ENCODE measurements at regions of chr2 and their contacts with region 1.

Region 1: DNA sequence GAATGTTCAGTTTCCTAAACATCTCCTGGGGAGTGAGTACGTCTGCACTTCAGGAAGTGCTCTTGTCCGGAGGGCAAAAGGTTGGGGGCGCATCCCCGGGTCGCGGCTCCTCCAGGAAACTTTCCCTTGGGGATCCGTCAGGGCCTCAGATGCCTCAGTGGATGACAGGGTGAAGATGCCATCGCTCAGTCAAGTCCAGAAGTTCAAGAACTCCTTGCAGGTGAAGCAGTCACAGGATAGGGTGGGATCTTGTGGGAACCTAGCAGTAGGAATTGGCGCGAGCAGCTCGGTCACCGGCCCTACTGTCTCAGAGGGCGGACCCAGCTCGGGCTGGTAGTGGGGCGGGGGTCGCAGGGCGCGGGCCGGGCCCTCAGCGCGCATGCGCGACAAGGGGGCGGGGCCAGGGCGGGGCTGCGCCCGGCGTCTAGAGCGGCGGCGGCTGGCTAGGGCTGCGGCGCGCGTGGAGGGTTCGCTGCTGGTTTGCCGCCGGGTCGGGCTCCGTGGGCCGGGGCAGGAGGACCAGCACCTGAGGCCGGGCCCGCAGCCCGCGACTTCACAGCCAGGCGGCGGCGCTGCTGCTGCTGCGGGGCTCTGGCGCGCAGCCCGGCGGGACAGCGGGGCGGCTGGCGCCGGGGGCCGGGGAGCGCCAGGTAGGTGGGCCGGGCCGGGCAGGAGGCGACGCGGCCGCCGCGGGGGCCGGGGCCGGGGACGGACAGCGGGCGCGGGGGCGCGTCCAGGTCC is at the start of gene INPP4A:
- DNase-seq: peak in 9 of 10 donors; percentile 46 to 81 (median 65)
- H3K4me3 ChIP-seq: peak within 1 kb of the TSS; percentile 52 to 86 (median 74)
- H3K27ac ChIP-seq: peak within 1 kb of the TSS in 57 of 59 donors; percentile 9 to 91 (median 72)
- H3K27me3 ChIP-seq: no peaks in the 10 kb centered on the region
- CTCF ChIP-seq: peak in 15 of 56 donors; percentile 7 to 48 (median 19)
- total RNA-seq, gene INPP4A: 54.2 to 160 (median 122) TPM

Region 2: DNA sequence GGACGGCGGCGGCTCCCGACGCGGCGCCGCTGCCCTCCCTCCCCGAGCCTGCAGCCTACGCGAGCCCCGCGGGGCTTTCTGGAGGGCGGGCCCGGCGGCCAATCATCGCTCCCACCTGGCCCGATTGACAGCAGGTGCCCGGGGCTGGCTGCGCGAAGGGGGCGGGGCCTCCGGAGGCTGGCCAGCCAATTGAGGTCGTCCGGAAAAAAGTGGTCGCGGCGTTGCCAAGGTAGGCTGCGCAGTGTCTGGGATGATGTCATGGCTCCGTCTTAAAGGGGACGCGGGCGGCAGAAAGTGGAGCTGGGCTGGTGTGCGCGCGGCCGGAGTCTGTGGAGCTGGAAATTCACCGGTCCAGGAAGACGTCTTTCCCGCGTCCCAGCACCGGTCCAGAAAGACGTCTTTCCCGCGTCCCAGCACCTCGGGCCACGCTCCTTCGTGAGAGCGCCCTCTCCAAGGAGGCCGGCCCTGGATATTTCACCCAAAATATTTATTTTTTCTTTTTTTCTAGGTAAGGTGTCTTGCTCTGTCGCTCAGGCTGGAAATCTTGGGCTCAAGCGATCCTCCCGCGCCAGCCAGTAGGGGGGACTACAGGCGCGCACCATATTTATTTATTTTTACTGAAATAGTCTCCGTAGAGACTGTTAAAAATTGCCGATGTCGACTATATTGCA is 780.5 kb before region 1 on chr2 and contains the start of gene ACTR1B:
- intact Hi-C with region 1: loop called in 1 of 2 experiments (anchors 10 kb)
- DNase-seq: peak; percentile 95 to 99 (median 98)
- H3K4me3 ChIP-seq: peak within 1 kb of the TSS; percentile 58 to 98 (median 83)
- H3K27ac ChIP-seq: peak within 1 kb of the TSS; percentile 70 to 99 (median 96)
- H3K27me3 ChIP-seq: no peaks in the 10 kb centered on the region
- CTCF ChIP-seq: peak in 53 of 56 donors; percentile 27 to 69 (median 50)
- total RNA-seq, gene ACTR1B: 72.4 to 175 (median 133) TPM

Region 3: DNA sequence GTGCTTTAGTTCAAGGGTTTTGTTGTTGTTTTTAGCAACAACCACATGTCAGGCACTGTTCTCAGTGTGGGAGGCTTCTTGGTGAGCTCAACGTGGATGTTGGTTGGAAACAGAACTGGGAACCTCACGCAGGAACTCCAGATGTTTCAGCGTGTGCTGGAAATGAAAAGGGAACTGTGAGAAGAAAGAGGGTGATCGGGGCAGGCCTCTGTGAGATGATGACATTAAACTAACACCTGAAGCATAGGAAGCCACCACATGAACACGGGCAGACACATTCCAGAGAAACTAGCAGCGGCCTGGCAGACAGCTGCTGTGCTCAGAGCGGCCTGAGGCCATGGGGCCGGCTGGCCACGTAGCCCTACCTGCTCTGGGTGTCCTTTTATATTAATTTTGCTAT is 97.3 kb after region 1 on chr2:
- intact Hi-C with region 1: no loop called
- DNase-seq: no peak
- H3K4me3 ChIP-seq: no peak overlapping the region
- H3K27ac ChIP-seq: peak overlapping the region in 14 of 59 donors; percentile 0 to 49 (median 17)
- H3K27me3 ChIP-seq: no peaks in the 10 kb centered on the region
- CTCF ChIP-seq: no peak

Region 4: GRCh38 chr2:98608116-98608999 is 163.8 kb after region 1 on chr2 and contains the starts of genes COA5 and UNC50:
- intact Hi-C with region 1: loop called (anchors 10 kb)
- DNase-seq: peak; percentile 64 to 92 (median 82)
- H3K4me3 ChIP-seq: peak within 1 kb of the TSS; percentile 60 to 100 (median 98)
- H3K27ac ChIP-seq: peak within 1 kb of the TSS; percentile 70 to 98 (median 93)
- H3K27me3 ChIP-seq: no peaks in the 10 kb centered on the region
- CTCF ChIP-seq: peak in 47 of 56 donors; percentile 3 to 67 (median 37)
- total RNA-seq, gene COA5: 41.4 to 68.3 (median 56.3) TPM
- total RNA-seq, gene UNC50: 30.2 to 65.7 (median 43.9) TPM

Region 5: DNA sequence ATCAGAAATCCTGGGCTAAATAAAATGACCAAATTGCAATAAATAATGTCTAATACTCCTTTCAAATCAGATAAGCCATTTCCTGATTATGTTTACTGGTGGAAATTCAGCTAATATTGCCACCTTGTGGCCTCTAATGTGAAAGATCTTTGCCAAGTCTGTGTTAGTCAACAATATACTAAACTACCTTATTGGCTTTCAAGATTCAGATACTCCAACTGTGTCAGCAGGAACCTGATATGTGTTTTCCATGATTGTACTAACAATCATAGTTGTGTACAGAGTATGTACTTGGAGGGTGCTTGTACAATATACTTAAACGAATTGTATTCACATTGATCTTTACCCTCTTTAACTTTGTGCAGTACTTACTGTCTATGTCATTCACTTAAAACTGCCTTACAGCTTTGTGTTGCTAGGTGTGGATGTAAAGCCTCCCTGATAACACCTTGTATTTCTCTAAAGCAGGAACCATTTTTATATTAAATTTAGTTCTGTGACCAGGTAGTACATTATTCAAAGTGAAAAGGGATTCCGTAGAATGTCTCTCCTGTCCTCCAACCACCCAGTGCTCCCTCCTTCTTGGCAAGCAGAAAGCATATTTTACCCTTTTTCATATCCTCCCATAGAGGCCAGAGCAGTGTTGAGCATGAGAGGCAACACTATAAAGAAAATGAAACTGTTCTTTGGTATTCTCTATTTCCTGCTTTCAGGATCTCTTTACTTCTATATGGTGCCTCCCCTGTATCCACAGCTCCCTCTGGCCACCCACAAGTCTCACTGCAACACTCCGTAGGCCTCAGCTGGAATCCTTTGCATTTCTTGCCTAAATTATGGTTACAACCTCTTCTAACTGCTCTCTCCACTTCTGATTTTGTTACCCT is 621.7 kb after region 1 on chr2:
- intact Hi-C with region 1: no loop called
- DNase-seq: peak in 3 of 10 donors; percentile 35 to 43 (median 40)
- H3K4me3 ChIP-seq: peak overlapping the region in 2 of 59 donors; percentile 7 to 25
- H3K27ac ChIP-seq: peak overlapping the region in 50 of 59 donors; percentile 7 to 78 (median 45)
- H3K27me3 ChIP-seq: no peaks in the 10 kb centered on the region
- CTCF ChIP-seq: peak in 55 of 56 donors; percentile 11 to 75 (median 54)

Measured in dorsolateral prefrontal cortex (tissue), 120 donors.